A673 (cell line): ENCODE measurements at regions of chr1 and their contacts with region 1.

Region 1: DNA sequence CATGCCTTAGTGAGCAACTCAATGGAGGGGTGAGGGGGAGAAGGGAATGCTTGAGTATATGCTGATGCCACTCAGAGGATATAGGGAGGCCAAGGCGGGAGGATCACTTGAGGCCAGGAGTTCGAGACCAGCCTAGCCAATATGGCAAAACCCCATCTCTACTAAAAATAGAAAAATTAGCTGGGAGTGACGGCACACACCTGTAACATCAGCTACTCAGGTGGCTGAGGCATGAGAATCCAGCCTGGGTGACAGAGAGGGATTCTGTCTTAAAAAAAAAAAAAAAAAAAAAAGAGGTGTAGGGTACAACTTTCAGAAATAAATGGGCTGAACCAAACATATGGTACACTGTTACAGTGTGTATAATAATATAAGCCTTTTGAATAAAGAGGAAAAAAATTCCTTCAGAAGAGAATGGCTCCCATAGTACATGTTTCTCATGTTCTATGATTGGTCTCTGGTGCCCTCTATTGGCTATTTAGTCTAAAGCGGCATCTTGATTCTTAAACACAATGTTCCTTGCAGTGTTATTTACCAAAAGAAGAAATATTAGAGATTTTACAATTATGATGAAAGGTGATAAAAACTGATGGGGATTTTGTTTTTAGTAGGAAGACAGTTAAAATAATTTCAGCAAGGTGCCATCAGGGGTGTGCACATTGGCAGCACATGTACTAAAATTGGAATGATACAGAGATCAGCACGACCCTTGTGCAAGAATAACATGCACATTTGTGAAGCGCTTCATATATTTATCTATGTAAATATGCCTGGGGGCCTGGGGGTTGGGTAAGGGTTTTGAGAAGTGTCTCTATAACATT is 109.8 kb downstream of the PATJ start:
- DNase-seq: peak; percentile 85
- H3K4me3 ChIP-seq: no peak overlapping the region
- H3K27ac ChIP-seq: no peak overlapping the region
- H3K4me1 ChIP-seq: peaks cover 23% of the 10 kb centered on the region
- H3K27me3 ChIP-seq: no peaks in the 10 kb centered on the region
- CTCF ChIP-seq: peak; percentile 90

Region 2: GRCh38 chr1:59971464-59971911 is 1880.6 kb before region 1 on chr1:
- CTCF ChIA-PET with region 1: interaction called, 3 read pairs
- POLR2A ChIA-PET with region 1: no interaction called
- intact Hi-C with region 1: loop called (anchors 2 kb)
- DNase-seq: peak; percentile 85
- H3K4me3 ChIP-seq: no peak overlapping the region
- H3K27ac ChIP-seq: no peak overlapping the region
- H3K4me1 ChIP-seq: no peaks in the 10 kb centered on the region
- H3K27me3 ChIP-seq: peaks cover 25% of the 10 kb centered on the region
- CTCF ChIP-seq: peak; percentile 95

Region 3: GRCh38 chr1:60969971-60970509 is 882.0 kb before region 1 on chr1:
- CTCF ChIA-PET with region 1: no interaction called
- POLR2A ChIA-PET with region 1: no interaction called
- intact Hi-C with region 1: loop called (anchors 5 kb)
- DNase-seq: peak; percentile 76
- H3K4me3 ChIP-seq: no peak overlapping the region
- H3K27ac ChIP-seq: no peak overlapping the region
- H3K4me1 ChIP-seq: peaks cover 8% of the 10 kb centered on the region
- H3K27me3 ChIP-seq: no peaks in the 10 kb centered on the region
- CTCF ChIP-seq: peak; percentile 69

Region 4: GRCh38 chr1:61337981-61338848 is 513.8 kb before region 1 on chr1:
- CTCF ChIA-PET with region 1: interaction called, 3 read pairs
- POLR2A ChIA-PET with region 1: no interaction called
- intact Hi-C with region 1: loop called (anchors 5 kb)
- DNase-seq: peak; percentile 87
- H3K4me3 ChIP-seq: peak overlapping the region; percentile 33
- H3K27ac ChIP-seq: peak overlapping the region; percentile 69
- H3K4me1 ChIP-seq: peaks cover 39% of the 10 kb centered on the region
- H3K27me3 ChIP-seq: no peaks in the 10 kb centered on the region
- CTCF ChIP-seq: peak; percentile 86

Region 5: GRCh38 chr1:61539720-61540462 is 312.2 kb before region 1 on chr1:
- CTCF ChIA-PET with region 1: no interaction called
- POLR2A ChIA-PET with region 1: no interaction called
- intact Hi-C with region 1: loop called (anchors 10 kb)
- DNase-seq: no peak
- H3K4me3 ChIP-seq: no peak overlapping the region
- H3K27ac ChIP-seq: no peak overlapping the region
- H3K4me1 ChIP-seq: no peaks in the 10 kb centered on the region
- H3K27me3 ChIP-seq: no peaks in the 10 kb centered on the region
- CTCF ChIP-seq: no peak

Region 6: DNA sequence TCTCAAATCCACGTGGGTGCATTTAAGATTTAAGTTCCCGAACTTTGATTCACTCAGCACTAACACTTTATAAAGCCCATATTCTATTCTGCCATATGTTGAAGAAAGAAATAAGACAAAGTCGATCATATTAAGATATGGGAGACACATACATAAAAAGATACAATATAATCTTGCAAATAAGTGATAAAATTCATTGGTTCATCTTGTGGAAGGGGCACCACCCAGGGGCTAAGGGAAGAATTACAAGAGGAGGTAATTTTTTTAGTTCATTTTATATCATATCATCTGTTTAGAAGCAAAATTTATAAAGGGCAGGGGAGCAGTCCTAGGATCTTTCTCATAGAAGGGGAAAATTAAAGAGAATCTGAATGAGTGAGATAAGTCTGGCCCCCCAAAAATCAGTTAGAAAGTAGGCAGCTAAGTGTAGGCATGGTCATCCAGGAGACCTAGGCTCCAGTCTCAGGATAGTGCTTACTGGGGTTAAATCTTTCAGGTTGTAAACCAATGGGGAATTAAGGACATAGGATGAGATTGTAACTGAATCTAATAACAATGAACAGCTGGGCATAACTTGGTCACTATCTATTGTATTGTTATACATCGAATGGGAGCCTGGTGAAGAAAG is 218.4 kb after region 1 on chr1:
- CTCF ChIA-PET with region 1: no interaction called
- POLR2A ChIA-PET with region 1: no interaction called
- intact Hi-C with region 1: loop called (anchors 5 kb)
- DNase-seq: peak; percentile 33
- H3K4me3 ChIP-seq: no peak overlapping the region
- H3K27ac ChIP-seq: no peak overlapping the region
- H3K4me1 ChIP-seq: no peaks in the 10 kb centered on the region
- H3K27me3 ChIP-seq: no peaks in the 10 kb centered on the region
- CTCF ChIP-seq: peak; percentile 87